A673 (cell line): ENCODE measurements at regions of chr2 and their contacts with region 1.

Region 1: GRCh38 chr2:112626604-112627059 is 19.1 kb upstream of the SLC20A1 start:
- DNase-seq: peak; percentile 71
- H3K4me3 ChIP-seq: no peak overlapping the region
- H3K27ac ChIP-seq: no peak overlapping the region
- H3K4me1 ChIP-seq: peaks cover 10% of the 10 kb centered on the region
- H3K27me3 ChIP-seq: no peaks in the 10 kb centered on the region
- CTCF ChIP-seq: peak; percentile 93

Region 2: DNA sequence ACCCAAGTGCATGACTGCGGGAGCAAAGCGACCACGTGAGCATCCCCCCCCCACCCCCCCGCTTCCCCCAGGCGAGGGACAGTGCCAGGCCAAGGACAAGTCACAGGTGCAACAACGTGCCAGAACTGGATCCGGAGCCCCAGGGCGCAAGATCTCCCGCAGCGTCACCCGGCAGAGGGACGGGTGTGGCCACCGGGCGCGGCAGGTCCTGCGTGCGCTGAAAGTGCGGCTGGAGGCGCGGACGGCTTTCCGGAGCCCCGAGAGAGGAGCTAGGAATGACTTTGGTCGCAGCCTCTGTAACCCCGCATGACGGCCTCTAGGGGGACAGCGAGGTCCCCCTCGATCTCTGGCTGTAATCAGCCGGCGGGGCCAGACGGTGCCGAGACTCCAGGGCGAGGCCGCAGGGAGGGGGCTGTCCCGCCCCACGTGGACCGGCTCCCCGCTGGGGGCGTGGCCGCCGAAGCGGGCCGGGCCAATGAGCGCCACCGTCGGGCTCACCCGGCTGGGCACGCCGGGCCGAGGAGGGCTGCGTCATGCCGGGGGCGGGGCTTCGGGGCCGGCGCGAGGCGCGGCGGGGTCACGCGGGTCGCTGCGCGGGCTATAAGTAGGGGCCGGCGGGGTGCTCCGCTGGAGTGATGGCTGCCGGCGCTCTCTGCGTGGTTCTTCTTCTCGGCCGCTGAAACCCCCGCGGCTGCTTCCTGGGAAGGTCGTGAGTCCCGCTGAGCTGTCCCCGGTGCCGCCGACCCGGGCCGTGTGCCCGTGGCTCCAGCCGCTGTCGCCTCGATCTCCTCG is 18.9 kb after region 1 on chr2 and contains the start of gene SLC20A1:
- CTCF ChIA-PET with region 1: interaction called, 4 read pairs
- POLR2A ChIA-PET with region 1: interaction called, 21 read pairs
- intact Hi-C with region 1: no loop called
- DNase-seq: peak; percentile 96
- H3K4me3 ChIP-seq: peak within 1 kb of the TSS; percentile 96
- H3K27ac ChIP-seq: peak within 1 kb of the TSS; percentile 99
- H3K4me1 ChIP-seq: peaks cover 30% of the 10 kb centered on the region
- H3K27me3 ChIP-seq: no peaks in the 10 kb centered on the region
- CTCF ChIP-seq: 0 out of 2 replicates have a peak, but pooled peaks have one; percentile 27
- total RNA-seq, gene SLC20A1: 120 and 148 TPM in 2 replicates

Region 3: GRCh38 chr2:112692496-112692911 is 65.9 kb after region 1 on chr2:
- CTCF ChIA-PET with region 1: no interaction called
- POLR2A ChIA-PET with region 1: no interaction called
- intact Hi-C with region 1: loop called (anchors 2 kb)
- DNase-seq: no peak
- H3K4me3 ChIP-seq: no peak overlapping the region
- H3K27ac ChIP-seq: no peak overlapping the region
- H3K4me1 ChIP-seq: no peaks in the 10 kb centered on the region
- H3K27me3 ChIP-seq: no peaks in the 10 kb centered on the region
- CTCF ChIP-seq: no peak

Region 4: GRCh38 chr2:112726497-112727190 is 100.0 kb after region 1 on chr2:
- CTCF ChIA-PET with region 1: interaction called, 9 read pairs
- POLR2A ChIA-PET with region 1: no interaction called
- intact Hi-C with region 1: loop called (anchors 1 kb)
- DNase-seq: peak; percentile 94
- H3K4me3 ChIP-seq: no peak overlapping the region
- H3K27ac ChIP-seq: no peak overlapping the region
- H3K4me1 ChIP-seq: no peaks in the 10 kb centered on the region
- H3K27me3 ChIP-seq: no peaks in the 10 kb centered on the region
- CTCF ChIP-seq: peak; percentile 99

Region 5: GRCh38 chr2:112958428-112959108 is 331.9 kb after region 1 on chr2:
- CTCF ChIA-PET with region 1: interaction called, 3 read pairs
- POLR2A ChIA-PET with region 1: no interaction called
- intact Hi-C with region 1: loop called (anchors 5 kb)
- DNase-seq: peak; percentile 86
- H3K4me3 ChIP-seq: no peak overlapping the region
- H3K27ac ChIP-seq: no peak overlapping the region
- H3K4me1 ChIP-seq: no peaks in the 10 kb centered on the region
- H3K27me3 ChIP-seq: no peaks in the 10 kb centered on the region
- CTCF ChIP-seq: peak; percentile 90